Stomach (tissue), 19 donors: ENCODE measurements at regions of chr1 and their contacts with region 1.

Region 1: DNA sequence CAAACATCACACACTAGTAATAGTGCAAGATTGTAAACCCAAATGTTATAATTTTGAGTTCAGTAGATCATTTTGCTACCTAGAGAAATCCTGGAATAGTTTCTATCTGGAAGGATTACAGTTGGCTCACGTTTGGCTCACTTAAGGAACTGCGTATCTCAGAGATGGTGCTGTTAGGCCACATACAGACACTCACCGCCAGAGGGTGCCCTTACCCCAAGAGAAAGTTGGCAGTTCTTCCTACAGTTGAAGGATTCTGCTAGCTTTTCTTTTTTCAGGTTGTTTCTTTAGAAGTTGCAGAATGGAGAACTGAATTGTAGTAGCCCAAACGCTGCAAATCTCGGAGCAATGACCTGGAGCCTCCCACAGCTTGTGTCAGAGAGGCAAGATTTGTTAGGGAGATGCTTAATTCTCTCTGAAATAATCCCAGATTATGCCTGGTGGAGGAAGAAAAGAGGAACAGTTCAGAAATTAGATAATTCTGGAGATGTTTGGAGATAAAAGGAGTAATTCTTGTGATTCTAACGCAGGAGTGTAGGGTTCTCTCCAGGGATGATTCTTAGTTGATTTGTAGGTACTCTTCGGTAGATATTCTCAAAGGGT is 87.9 kb upstream of the PAPPA2 start:
- DNase-seq: peak; percentile 78 to 90
- H3K4me3 ChIP-seq: no peak overlapping the region
- H3K27ac ChIP-seq: no peak overlapping the region
- H3K4me1 ChIP-seq: no peaks in the 10 kb centered on the region
- H3K27me3 ChIP-seq: no peaks in the 10 kb centered on the region
- CTCF ChIP-seq: peak in 5 of 7 experiments; percentile 32 to 73 (median 70)
- EP300 ChIP-seq: no peak
- POLR2A ChIP-seq: no peak

Region 2: DNA sequence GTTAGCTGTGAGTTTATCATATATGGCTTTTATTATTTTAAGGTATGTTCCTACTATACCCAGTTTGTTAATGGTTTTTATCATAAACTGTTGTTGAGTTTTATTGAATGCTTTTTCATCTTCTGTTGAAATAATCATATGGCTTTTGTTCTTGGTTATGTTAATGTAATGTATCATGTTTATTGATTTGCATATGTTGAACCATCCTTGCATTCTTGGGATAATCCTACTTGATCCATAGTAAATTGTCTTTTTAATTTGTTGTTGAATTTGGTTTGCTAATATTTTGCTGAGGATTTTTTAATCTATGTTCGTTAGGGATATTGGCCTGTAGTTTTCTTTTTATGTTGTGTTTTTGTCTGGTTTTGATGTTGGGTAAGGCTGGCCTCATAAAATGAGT is 273.5 kb after region 1 on chr1:
- intact Hi-C with region 1: no loop called
- DNase-seq: no peak
- H3K4me3 ChIP-seq: no peak overlapping the region
- H3K27ac ChIP-seq: no peak overlapping the region
- H3K4me1 ChIP-seq: no peaks in the 10 kb centered on the region
- H3K27me3 ChIP-seq: no peaks in the 10 kb centered on the region
- CTCF ChIP-seq: no peak
- EP300 ChIP-seq: no peak
- POLR2A ChIP-seq: no peak

Region 3: DNA sequence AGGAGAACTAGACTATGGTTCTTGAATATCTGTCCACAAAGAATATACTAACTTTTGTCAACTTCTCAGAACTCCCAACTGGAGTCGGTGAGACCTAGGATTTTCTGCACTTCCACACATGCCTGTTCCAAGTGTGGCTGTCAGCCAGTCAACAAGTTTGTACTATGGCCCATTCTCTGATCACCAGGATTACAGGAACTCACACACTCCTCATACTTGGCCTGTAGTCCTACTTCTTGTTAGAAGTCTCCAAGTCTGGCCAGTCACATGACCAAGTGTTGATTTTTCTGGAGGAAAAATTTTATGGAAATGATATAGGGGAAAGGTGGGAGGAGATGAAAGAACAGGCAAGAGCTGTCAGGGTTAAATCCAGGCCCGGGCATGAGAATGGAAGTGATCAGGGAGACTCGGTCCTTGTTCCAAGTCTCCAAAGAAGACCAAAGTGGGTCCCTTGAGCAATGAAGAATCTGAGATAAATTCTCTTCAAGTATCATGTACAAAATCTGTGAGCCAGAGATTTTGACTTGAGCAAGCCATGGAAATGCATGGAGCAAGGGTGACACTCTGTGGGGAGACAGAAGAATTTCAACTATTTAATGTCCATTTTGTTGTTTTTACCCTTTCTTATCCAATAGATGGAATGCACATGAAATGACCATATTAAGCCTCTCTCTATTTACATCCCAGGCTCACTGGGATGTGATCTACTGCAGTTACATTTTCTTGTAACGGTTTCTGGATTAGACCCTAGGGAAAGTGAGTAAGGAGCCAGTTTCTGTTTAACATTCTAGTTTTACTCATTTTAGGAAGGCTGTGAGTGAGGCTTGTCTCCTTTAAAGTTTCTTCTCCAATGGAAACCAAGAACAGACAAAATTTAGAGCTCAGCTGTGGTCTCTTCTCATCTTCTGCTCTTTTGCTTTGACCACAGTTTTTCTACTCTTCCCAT is 468.6 kb after region 1 on chr1:
- intact Hi-C with region 1: loop called (anchors 10 kb)
- DNase-seq: peak in 1 of 2 donors; percentile 84
- H3K4me3 ChIP-seq: no peak overlapping the region
- H3K27ac ChIP-seq: no peak overlapping the region
- H3K4me1 ChIP-seq: peaks cover 0 to 16% (median 3%) of the 10 kb centered on the region in 4 donors
- H3K27me3 ChIP-seq: no peaks in the 10 kb centered on the region
- CTCF ChIP-seq: peak in 5 of 7 experiments; percentile 21 to 70 (median 32)
- EP300 ChIP-seq: no peak
- POLR2A ChIP-seq: no peak